Mucosa of descending colon (tissue), 3 donors: ENCODE measurements at regions of chr7 and their contacts with region 1.

Region 1: DNA sequence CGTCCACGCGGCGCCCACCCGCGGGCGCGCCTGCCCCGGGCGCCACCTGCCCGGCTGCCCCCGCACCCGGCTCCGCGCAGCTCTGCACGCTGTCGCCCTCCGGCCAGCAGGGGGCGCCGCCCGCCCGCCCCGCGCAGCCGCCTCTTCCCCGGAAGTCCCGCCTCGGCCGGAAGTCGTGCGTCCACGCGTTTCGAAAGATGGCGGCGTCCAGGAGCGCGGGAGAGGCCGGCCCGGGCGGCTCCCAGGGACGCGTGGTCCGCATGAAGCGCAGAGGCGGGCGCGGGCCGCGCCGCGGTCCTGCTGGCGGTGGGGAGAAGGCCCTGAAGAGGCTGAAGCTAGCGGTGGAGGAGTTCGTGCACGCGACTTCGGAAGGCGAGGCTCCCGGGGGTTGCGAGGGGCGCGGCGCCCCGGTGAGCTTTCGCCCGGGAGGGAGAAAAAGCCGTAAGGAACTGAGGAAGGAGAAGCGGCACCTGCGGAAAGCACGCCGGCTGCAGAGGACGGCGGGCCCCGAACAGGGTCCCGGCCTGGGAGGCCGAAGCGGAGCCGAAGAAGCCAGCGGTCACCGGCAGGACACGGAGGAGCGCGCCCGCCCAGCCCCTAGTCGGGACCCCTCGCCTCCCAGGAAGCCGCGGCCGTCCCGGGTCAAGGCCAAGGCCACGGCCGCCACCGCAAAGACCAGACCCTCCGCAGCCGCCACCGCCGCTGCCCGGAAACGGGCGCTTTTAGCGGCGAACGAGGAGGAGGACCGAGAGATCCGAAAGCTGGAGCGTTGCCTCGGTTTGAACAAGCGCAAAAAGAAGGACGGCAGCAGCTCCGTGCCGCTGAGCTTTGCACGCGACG is at the start of gene NOM1:
- DNase-seq: peak; percentile 91 to 94 (median 93)
- ATAC-seq: peak; percentile 99
- H3K4me3 ChIP-seq: peak within 1 kb of the TSS; percentile 95
- H3K4me1 ChIP-seq: peaks cover 20% of the 10 kb centered on the region
- CTCF ChIP-seq: peak; percentile 97
- total RNA-seq, gene NOM1: 13.9 to 20.9 (median 15.9) TPM

Region 2: DNA sequence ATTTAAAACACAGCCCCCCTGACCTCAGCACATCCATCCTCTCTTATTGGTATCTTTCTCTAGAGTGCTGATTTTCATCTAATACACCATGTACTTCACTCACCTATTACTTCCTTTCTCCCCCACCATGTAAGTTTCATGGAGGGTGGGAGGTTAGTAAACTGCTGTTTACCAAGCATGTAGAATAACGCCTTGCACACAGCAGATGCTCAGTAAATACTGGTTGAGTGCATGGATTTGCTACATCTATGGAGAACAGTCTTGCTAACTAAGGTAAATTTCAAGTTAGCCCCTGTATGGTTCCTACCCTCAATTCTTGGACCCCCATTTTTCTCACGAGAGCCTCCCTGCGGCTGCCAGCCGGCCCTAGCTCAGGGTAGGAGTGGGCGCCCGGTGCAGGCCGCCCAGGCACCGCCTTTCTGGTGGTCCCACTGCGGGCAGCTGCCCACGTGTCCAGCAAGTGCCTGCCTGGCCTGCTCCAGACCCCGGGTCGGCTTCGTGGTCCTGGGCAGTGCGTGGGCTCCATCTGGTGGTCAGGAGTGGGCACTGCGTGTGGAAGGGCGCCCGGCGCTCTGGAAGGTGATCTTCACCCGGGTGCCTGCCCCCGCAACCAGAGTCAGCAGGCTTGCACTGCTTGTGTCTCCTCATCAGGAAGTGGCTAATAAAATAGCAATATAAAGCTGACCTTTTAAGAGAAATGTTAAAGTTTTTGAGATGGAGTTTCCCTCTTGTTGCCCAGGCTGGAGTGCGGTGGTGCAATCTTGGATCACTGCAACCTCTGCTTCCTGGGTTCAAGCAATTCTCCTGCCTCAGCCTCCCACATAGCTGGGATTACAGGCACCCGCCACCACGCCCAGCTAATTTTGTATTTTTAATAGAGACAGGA is 323.7 kb after region 1 on chr7:
- intact Hi-C with region 1: loop called in 1 of 2 experiments (anchors 10 kb)
- DNase-seq: peak; percentile 74 to 80 (median 76)
- ATAC-seq: peak; percentile 88
- H3K4me3 ChIP-seq: no peak overlapping the region
- H3K4me1 ChIP-seq: peaks cover 9% of the 10 kb centered on the region
- CTCF ChIP-seq: peak; percentile 97

Region 3: GRCh38 chr7:157386979-157387800 is 437.4 kb after region 1 on chr7:
- intact Hi-C with region 1: no loop called
- DNase-seq: peak; percentile 74 to 87 (median 81)
- ATAC-seq: peak; percentile 88
- H3K4me3 ChIP-seq: no peak overlapping the region
- H3K4me1 ChIP-seq: peaks cover 15% of the 10 kb centered on the region
- CTCF ChIP-seq: peak; percentile 62